ENCODE measurements at regions of chr13 and their contacts with region 1.

Region 1: GRCh38 chr13:82847595-82847994 is 1034.7 kb downstream of the SLITRK1 start:
- DNase-seq: no peak
- H3K4me3 ChIP-seq: no peak overlapping the region
- H3K27ac ChIP-seq: no peak overlapping the region
- H3K4me1 ChIP-seq: no peaks in the 10 kb centered on the region
- H3K27me3 ChIP-seq: no peaks in the 10 kb centered on the region
- CTCF ChIP-seq: no peak
- POLR2A ChIP-seq: no peak

Region 2: DNA sequence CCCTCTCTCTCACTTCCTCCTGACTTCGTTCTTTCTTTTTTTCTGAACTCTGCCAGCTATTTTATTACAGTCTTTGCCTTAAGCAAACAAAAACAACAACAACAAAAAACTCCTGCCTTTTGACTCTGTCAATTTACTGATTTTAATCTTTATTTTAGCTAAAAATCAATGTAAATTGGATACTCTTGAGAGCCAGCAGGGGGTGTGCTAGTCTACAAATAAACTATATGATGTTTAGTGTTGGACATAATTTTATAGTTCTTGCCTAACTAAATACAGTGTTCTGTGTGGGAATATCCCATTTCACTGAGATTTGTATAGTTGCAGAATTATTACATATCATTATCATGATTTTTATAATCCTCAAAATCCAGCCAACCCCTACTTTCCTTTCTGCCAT is 1306.8 kb before region 1 on chr13:
- intact Hi-C with region 1: loop called (anchors 5 kb)
- DNase-seq: no peak
- H3K4me3 ChIP-seq: no peak overlapping the region
- H3K27ac ChIP-seq: no peak overlapping the region
- H3K4me1 ChIP-seq: no peaks in the 10 kb centered on the region
- H3K27me3 ChIP-seq: no peaks in the 10 kb centered on the region
- CTCF ChIP-seq: no peak
- POLR2A ChIP-seq: no peak

Region 3: GRCh38 chr13:84208246-84208910 is 1360.8 kb after region 1 on chr13:
- intact Hi-C with region 1: loop called (anchors 10 kb)
- DNase-seq: no peak
- H3K4me3 ChIP-seq: no peak overlapping the region
- H3K27ac ChIP-seq: no peak overlapping the region
- H3K4me1 ChIP-seq: no peaks in the 10 kb centered on the region
- H3K27me3 ChIP-seq: no peaks in the 10 kb centered on the region
- CTCF ChIP-seq: no peak
- POLR2A ChIP-seq: no peak

Measured in breast epithelium (tissue), 4 donors.